ENCODE measurements at regions of chr17 and their contacts with region 1.

Region 1: GRCh38 chr17:78112518-78113226 is 15.9 kb downstream of the TMC6 start:
- DNase-seq: peak; percentile 75 to 86 (median 82)
- ATAC-seq: peak; percentile 77
- H3K4me3 ChIP-seq: no peak overlapping the region
- H3K27ac ChIP-seq: no peak overlapping the region
- H3K4me1 ChIP-seq: peaks cover 17% of the 10 kb centered on the region
- H3K27me3 ChIP-seq: no peaks in the 10 kb centered on the region
- CTCF ChIP-seq: peak; percentile 93 to 100 (median 96)
- POLR2A ChIP-seq: no peak

Region 2: DNA sequence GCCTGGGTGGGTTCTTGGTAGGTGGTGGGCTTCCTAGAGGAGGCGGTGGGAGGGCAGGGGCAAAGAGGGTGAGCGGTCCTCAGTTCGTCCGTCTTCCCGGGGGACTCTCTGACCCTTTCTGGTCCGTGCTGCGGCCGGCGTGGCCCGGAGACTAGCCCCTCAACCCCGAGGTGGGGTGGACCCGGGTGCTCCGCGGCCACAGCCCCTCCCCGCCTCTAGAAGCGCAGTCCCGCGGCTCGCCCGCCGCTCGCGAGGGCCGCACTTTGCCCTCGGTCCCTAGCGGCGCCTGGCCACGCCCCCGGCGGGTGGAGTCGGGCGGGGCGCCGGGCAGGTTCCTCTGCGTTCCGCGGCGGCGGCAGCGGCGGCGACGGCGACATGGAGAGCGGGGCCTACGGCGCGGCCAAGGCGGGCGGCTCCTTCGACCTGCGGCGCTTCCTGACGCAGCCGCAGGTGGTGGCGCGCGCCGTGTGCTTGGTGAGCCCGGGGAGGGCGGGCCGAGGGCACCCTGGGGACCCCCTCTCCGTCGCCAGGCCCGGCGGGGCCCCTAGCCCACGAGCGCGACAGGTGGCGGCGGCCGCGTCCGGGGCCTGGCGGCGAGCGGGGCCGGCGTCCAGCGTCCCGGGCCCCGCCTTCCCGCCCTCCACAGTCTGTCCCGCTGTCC is 55.7 kb after region 1 on chr17 and contains the start of gene SYNGR2:
- intact Hi-C with region 1: loop called (anchors 10 kb)
- DNase-seq: peak; percentile 85 to 90 (median 89)
- ATAC-seq: peak; percentile 90
- H3K4me3 ChIP-seq: peak within 1 kb of the TSS; percentile 58
- H3K27ac ChIP-seq: peak within 1 kb of the TSS; percentile 86 to 96 (median 91)
- H3K4me1 ChIP-seq: peaks cover 53% of the 10 kb centered on the region
- H3K27me3 ChIP-seq: no peaks in the 10 kb centered on the region
- CTCF ChIP-seq: peak in 1 of 7 experiments; percentile 18
- POLR2A ChIP-seq: peak; percentile 47 to 90 (median 72)
- total RNA-seq, gene SYNGR2: 68.6 to 86.4 TPM

Region 3: DNA sequence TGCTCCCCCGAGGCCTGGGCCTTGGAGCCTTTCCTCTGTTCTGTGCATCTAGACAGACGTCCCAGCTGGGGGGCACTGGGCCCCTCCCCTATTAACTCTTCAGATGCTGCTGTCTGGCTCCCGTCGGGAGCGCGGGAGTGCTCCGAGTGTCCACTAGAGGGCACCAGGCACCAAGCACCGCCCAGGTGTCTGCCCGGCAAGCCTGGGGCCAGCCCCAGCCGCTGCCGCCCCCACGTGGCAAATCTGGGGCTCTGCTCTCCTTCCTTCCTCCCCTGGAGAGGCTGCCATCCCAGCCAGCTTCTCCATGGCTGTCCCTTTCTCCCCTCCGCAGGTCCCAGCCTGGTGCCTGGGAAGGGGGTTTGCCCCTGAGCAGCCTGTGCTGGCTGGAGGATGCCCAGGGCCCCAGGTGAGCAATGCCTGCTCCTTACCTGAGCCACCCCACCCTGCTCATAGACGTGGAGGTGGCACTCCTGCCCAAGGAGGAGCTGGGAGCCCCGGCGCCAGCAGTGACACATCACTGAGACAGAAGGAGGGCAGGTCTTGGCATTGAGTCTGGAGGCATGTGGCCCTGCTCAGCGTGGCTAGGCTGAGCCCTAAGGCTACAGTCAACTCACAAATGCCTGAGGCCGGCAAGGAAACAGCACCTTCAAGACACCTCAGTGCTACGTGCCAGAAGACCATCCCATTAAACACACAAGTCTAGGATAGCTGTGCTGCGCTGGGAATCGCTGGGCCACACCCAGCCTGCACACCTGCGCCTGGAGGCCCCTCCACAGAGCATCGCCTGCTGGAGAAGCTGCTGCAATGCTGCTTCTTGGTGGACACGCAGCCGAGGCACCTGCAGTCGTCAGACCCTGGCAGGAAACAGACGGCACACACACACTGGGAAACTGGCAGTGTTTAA is 138.5 kb after region 1 on chr17:
- intact Hi-C with region 1: loop called (anchors 5 kb)
- DNase-seq: peak; percentile 86 to 87 (median 87)
- ATAC-seq: peak; percentile 91
- H3K4me3 ChIP-seq: no peak overlapping the region
- H3K27ac ChIP-seq: peak overlapping the region in 1 of 4 donors; percentile 29
- H3K4me1 ChIP-seq: peaks cover 23% of the 10 kb centered on the region
- H3K27me3 ChIP-seq: no peaks in the 10 kb centered on the region
- CTCF ChIP-seq: peak; percentile 98 to 100 (median 99)
- POLR2A ChIP-seq: no peak

Region 4: GRCh38 chr17:78411241-78411857 is 298.7 kb after region 1 on chr17:
- intact Hi-C with region 1: no loop called
- DNase-seq: no peak
- ATAC-seq: no peak
- H3K4me3 ChIP-seq: no peak overlapping the region
- H3K27ac ChIP-seq: no peak overlapping the region
- H3K4me1 ChIP-seq: peaks cover 27% of the 10 kb centered on the region
- H3K27me3 ChIP-seq: no peaks in the 10 kb centered on the region
- CTCF ChIP-seq: no peak
- POLR2A ChIP-seq: no peak

Region 5: GRCh38 chr17:78421484-78422266 is 309.0 kb after region 1 on chr17:
- intact Hi-C with region 1: loop called (anchors 10 kb)
- DNase-seq: peak; percentile 75 to 81 (median 79)
- ATAC-seq: peak; percentile 84
- H3K4me3 ChIP-seq: no peak overlapping the region
- H3K27ac ChIP-seq: no peak overlapping the region
- H3K4me1 ChIP-seq: no peaks in the 10 kb centered on the region
- H3K27me3 ChIP-seq: no peaks in the 10 kb centered on the region
- CTCF ChIP-seq: peak; percentile 91 to 99 (median 96)
- POLR2A ChIP-seq: no peak

Measured in body of pancreas (tissue), 4 donors.